CD4-positive, alpha-beta memory T cell (primary cell): ENCODE measurements at regions of chr16 and their contacts with region 1.

Region 1: DNA sequence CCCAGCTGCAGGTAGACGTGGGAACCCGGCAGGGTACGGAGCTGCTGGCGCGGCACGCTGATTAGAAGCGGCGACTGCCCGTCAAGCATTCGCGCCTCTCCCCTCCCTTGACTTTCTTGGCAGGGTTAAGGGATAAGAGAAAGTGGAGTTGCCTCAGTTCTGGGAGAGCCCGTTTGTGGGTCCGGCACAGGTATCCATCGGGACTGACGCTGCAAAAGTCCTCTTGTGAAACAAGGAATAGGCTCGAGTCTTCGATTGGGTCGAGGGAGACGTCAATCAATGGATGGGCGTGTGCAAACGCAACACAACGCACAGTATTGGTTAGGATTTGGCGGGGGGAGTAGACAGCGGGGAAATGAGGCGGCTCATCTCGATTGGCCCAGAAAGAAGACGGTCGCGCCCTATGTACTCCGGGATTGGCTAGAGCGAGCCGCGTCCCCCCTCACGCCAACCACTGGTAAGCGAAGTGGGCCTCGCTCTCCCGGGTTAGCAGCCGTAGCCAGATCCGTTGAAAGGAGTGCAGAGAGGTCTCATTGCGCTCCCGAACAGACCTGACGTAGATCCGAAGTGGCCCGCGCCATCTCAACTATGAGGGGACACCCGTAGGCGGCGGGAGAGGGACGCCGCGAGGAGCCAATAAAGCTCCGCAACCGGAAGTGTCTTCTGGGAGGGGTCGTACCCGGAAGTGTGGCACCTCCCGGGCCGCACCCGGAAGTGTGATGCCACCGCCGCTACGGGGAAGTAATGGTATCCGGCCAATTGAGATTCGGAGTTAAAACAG is at the start of gene MON1B:
- DNase-seq: peak; percentile 97 to 98 (median 98)
- H3K4me3 ChIP-seq: peak within 1 kb of the TSS; percentile 97 to 99
- H3K4me3 Mint-ChIP-seq: peak within 1 kb of the TSS; percentile 94 to 100 (median 98)
- H3K27ac ChIP-seq: peak within 1 kb of the TSS; percentile 93
- H3K27ac Mint-ChIP-seq: peak within 1 kb of the TSS; percentile 98 to 100 (median 99)
- H3K4me1 ChIP-seq: peaks cover 27% of the 10 kb centered on the region
- H3K4me1 Mint-ChIP-seq: peaks cover 31 to 50% (median 38%) of the 10 kb centered on the region in 4 donors
- H3K27me3 ChIP-seq: no peaks in the 10 kb centered on the region
- H3K27me3 Mint-ChIP-seq: no peaks in the 10 kb centered on the region
- total RNA-seq, gene MON1B: 82.4 to 85.4 TPM

Region 2: DNA sequence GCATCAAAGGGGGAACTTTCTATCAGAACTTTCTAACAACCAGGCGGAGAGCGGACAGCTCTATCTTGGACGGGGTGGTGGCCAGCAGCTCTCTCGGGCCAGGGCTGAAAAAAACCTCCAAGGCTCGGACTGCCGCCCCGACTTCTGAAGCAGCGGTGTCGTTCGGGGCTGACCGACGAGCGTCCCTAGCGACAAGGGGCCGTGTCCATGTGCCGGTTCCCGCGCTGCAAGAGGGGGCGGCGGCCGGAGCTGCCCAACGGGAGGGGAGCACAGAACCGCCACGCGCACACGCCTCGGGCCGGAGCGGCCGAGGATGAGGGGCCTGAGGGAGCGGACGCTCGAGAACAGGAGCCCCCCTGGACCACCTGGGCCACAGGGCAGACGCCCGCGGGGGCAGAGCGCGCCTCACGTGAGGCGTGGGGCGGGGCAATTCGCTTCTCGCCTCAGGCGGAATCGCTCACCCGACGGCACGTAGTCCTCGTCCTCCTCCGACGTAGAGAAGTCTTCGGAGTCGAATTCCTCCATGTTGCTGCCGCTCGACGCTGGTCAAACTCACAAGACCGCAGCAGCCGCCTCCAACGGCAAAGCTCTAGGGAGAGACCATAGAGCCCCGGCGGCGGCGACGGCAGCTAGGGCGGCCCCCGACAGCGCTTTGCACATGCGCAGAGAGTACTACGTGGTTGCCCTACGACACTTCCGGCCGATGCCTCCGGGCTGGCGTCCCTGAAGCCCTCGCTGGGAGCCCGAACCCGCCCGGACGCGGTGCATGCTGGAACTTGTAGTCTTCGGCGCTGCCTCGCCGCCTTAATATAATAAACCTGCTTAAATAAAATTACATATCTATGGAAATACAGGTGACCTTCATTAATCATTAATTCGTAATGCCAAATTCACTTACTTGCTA is 1757.6 kb before region 1 on chr16 and contains the start of gene CFDP1:
- CTCF ChIA-PET with region 1: no interaction called
- POLR2A ChIA-PET with region 1: interaction called, 4 read pairs
- intact Hi-C with region 1: loop called (anchors 5 kb)
- DNase-seq: peak; percentile 96 to 98 (median 97)
- H3K4me3 ChIP-seq: peak within 1 kb of the TSS; percentile 61 to 90
- H3K4me3 Mint-ChIP-seq: peak within 1 kb of the TSS; percentile 89 to 95 (median 94)
- H3K27ac ChIP-seq: peak within 1 kb of the TSS; percentile 96
- H3K27ac Mint-ChIP-seq: peak within 1 kb of the TSS; percentile 92 to 98 (median 97)
- H3K4me1 ChIP-seq: peaks cover 30% of the 10 kb centered on the region
- H3K4me1 Mint-ChIP-seq: peaks cover 16 to 56% (median 43%) of the 10 kb centered on the region in 4 donors
- H3K27me3 ChIP-seq: no peaks in the 10 kb centered on the region
- H3K27me3 Mint-ChIP-seq: no peaks in the 10 kb centered on the region
- total RNA-seq, gene CFDP1: 41.8 to 42.4 TPM

Region 3: GRCh38 chr16:75622761-75623605 is 1567.7 kb before region 1 on chr16 and contains the start of gene ADAT1:
- CTCF ChIA-PET with region 1: no interaction called
- POLR2A ChIA-PET with region 1: no interaction called
- intact Hi-C with region 1: loop called (anchors 1 kb)
- DNase-seq: peak; percentile 95 to 99 (median 98)
- H3K4me3 ChIP-seq: peak within 1 kb of the TSS; percentile 86 to 90
- H3K4me3 Mint-ChIP-seq: peak within 1 kb of the TSS; percentile 90 to 98 (median 97)
- H3K27ac ChIP-seq: peak within 1 kb of the TSS; percentile 96
- H3K27ac Mint-ChIP-seq: peak within 1 kb of the TSS; percentile 97 to 99 (median 98)
- H3K4me1 ChIP-seq: peaks cover 59% of the 10 kb centered on the region
- H3K4me1 Mint-ChIP-seq: peaks cover 46 to 87% (median 58%) of the 10 kb centered on the region in 4 donors
- H3K27me3 ChIP-seq: no peaks in the 10 kb centered on the region
- H3K27me3 Mint-ChIP-seq: peaks cover 0 to 3% of the 10 kb centered on the region in 2 donors
- total RNA-seq, gene ADAT1: 88.3 to 93.9 TPM

Region 4: GRCh38 chr16:77132051-77132618 is 58.5 kb before region 1 on chr16:
- CTCF ChIA-PET with region 1: no interaction called
- POLR2A ChIA-PET with region 1: no interaction called
- intact Hi-C with region 1: no loop called
- DNase-seq: no peak
- H3K4me3 ChIP-seq: no peak overlapping the region
- H3K4me3 Mint-ChIP-seq: no peak overlapping the region
- H3K27ac ChIP-seq: no peak overlapping the region
- H3K27ac Mint-ChIP-seq: no peak overlapping the region
- H3K4me1 ChIP-seq: no peaks in the 10 kb centered on the region
- H3K4me1 Mint-ChIP-seq: no peaks in the 10 kb centered on the region
- H3K27me3 ChIP-seq: no peaks in the 10 kb centered on the region
- H3K27me3 Mint-ChIP-seq: peaks cover 3 to 4% of the 10 kb centered on the region in 2 donors

Region 5: DNA sequence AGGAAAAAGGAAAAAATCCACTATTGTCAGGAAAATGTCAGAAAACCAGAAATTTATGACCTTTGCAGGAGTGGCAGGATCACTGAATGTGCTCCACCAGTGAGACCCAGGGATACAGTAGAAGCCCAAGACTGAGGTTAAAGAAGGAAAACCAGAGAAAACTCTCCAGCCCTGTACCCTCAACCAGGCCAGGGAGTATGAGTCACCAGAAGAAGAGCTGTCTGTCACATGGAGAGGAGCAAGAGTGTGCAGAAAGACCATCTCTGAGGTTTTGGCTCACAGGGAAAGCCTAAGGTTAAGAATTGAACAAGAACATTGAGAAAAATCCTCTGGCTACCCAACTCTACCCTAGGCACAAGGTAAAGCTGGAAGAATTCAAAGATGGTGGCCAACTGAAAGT is 47.3 kb before region 1 on chr16:
- CTCF ChIA-PET with region 1: no interaction called
- POLR2A ChIA-PET with region 1: no interaction called
- intact Hi-C with region 1: no loop called
- DNase-seq: no peak
- H3K4me3 ChIP-seq: no peak overlapping the region
- H3K4me3 Mint-ChIP-seq: no peak overlapping the region
- H3K27ac ChIP-seq: no peak overlapping the region
- H3K27ac Mint-ChIP-seq: no peak overlapping the region
- H3K4me1 ChIP-seq: no peaks in the 10 kb centered on the region
- H3K4me1 Mint-ChIP-seq: no peaks in the 10 kb centered on the region
- H3K27me3 ChIP-seq: no peaks in the 10 kb centered on the region
- H3K27me3 Mint-ChIP-seq: peaks cover 0 to 3% of the 10 kb centered on the region in 2 donors

Region 6: DNA sequence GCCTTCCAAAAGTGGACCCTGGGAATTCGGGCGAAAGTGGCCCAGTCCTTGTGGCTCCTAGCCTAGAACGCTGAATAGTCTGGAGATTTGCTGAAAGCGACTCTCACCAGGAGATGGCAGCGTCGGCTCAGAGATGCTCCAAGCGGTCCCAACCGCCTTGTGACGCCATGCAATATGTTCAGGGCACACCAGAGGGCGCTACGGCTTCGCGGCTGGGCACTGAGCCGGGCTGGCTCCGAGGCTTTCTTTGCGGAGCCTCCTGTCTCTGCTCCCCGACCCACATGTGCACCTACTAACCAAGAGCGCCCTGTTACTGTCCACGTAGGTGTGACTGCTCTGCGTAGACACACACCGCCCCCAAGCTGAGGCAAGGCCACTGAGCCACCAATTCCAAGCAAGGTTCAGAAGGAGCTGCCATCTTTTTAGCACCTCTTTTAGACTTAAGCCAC is 45.4 kb after region 1 on chr16:
- CTCF ChIA-PET with region 1: no interaction called
- POLR2A ChIA-PET with region 1: no interaction called
- intact Hi-C with region 1: loop called (anchors 1 kb)
- DNase-seq: peak; percentile 80 to 87 (median 83)
- H3K4me3 ChIP-seq: peak overlapping the region in 1 of 2 donors; percentile 39
- H3K4me3 Mint-ChIP-seq: peak overlapping the region; percentile 52 to 85 (median 73)
- H3K27ac ChIP-seq: no peak overlapping the region
- H3K27ac Mint-ChIP-seq: peak overlapping the region in 2 of 7 donors; percentile 28 to 37
- H3K4me1 ChIP-seq: no peaks in the 10 kb centered on the region
- H3K4me1 Mint-ChIP-seq: peaks cover 2 to 6% (median 5%) of the 10 kb centered on the region in 4 donors
- H3K27me3 ChIP-seq: no peaks in the 10 kb centered on the region
- H3K27me3 Mint-ChIP-seq: peaks cover 8 to 23% of the 10 kb centered on the region in 2 donors

Region 7: DNA sequence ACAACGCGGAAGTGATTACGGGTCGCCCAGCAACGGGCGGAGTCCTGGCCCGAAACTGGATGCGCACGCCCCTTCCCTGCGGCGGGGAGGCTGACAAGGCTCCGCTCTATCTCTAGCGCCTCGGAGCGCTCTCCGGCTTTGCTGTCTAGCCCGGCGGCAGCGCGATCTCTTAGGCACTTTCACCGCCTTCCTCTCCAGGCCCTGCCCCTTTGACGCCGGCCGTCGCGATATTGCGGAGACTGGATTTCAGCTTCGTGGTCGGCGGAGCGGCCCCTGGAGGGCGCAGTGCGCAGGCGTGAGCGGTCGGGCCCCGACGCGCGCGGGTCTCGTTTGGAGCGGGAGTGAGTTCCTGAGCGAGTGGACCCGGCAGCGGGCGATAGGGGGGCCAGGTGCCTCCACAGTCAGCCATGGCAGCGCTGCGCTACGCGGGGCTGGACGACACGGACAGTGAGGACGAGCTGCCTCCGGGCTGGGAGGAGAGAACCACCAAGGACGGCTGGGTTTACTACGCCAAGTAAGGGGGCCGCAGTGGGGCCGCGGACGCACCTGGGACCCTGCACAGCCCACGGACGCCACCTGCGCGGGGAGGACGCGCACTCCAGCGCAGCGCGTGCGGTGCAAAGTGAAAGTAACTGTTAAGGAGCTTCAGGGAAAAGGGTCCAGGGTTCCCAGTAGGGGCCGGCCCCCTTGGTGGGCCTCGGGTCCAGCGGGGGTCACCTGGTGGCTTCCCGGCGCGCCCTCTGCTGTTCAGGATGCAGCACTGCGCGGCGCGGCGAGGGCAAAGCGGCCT is 908.9 kb after region 1 on chr16 and contains the start of gene WWOX:
- CTCF ChIA-PET with region 1: no interaction called
- POLR2A ChIA-PET with region 1: no interaction called
- intact Hi-C with region 1: loop called (anchors 1 kb)
- DNase-seq: peak; percentile 96 to 98 (median 98)
- H3K4me3 ChIP-seq: peak within 1 kb of the TSS; percentile 78 to 88
- H3K4me3 Mint-ChIP-seq: peak within 1 kb of the TSS; percentile 89 to 96 (median 91)
- H3K27ac ChIP-seq: peak within 1 kb of the TSS; percentile 89
- H3K27ac Mint-ChIP-seq: peak within 1 kb of the TSS; percentile 93 to 98 (median 96)
- H3K4me1 ChIP-seq: peaks cover 16% of the 10 kb centered on the region
- H3K4me1 Mint-ChIP-seq: peaks cover 16 to 44% (median 25%) of the 10 kb centered on the region in 4 donors
- H3K27me3 ChIP-seq: no peaks in the 10 kb centered on the region
- H3K27me3 Mint-ChIP-seq: peaks cover 0 to 7% of the 10 kb centered on the region in 2 donors
- total RNA-seq, gene WWOX: 21.9 to 23.1 TPM